CD4-positive, alpha-beta memory T cell (primary cell): ENCODE measurements at regions of chr5 and their contacts with region 1.

Region 1: DNA sequence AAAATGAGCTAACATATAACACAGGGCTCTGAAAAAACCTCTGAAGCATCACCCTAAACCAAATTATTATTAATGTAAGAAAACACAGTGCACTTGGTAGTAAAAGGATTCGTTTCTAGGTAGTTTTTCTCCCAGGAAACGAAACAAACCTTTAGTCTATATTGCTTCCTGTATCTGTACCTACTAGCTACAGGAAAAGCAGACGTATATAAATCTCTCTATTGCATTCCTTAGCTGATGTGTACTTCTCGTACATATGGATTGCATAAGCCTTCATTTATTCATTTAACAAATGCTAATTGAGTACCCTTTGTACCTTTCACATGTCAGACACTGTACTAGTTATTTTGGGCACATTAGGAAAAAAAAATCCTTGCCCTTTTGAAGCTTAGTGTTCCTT is 85.0 kb upstream of the RASA1 start:
- DNase-seq: peak in 4 of 5 donors; percentile 2 to 25 (median 8)
- H3K4me3 ChIP-seq: peak overlapping the region in 1 of 2 donors; percentile 10
- H3K4me3 Mint-ChIP-seq: peak overlapping the region; percentile 22 to 91 (median 75)
- H3K27ac ChIP-seq: no peak overlapping the region
- H3K27ac Mint-ChIP-seq: peak overlapping the region in 4 of 7 donors; percentile 42 to 78 (median 70)
- H3K4me1 ChIP-seq: peaks cover 15% of the 10 kb centered on the region
- H3K4me1 Mint-ChIP-seq: peaks cover 12 to 22% (median 17%) of the 10 kb centered on the region in 4 donors
- H3K27me3 ChIP-seq: no peaks in the 10 kb centered on the region
- H3K27me3 Mint-ChIP-seq: no peaks in the 10 kb centered on the region

Region 2: DNA sequence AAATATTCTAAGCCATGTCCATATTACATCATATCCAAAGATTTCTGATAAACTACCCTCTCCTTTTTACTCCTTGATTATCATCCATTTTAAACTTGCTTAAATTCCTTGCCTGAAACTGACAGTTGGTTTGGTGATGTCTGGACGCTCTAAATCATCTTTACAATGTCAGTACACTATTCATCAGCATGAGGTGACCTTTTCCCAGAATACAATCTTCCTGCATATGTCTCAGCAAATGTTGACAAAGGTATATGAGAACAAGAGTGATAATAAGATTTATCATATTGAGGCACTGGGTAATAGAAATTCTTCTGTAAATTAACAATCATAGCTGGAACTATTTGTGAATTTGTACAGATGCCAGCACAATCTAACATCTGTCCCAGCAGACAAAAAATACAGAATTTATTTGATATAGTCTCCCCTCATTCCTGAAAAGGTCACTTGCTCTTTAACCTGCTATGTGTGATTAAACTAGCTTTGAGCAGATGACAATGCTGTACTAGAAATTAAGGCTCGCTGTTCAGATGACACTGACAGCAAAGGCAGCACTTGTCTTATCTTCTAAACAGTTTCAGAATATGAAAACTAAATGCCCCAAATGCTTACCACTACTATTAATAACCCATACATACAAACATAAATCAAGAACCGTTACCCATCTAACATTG is 532.7 kb before region 1 on chr5:
- CTCF ChIA-PET with region 1: no interaction called
- POLR2A ChIA-PET with region 1: no interaction called
- intact Hi-C with region 1: no loop called
- DNase-seq: no peak
- H3K4me3 ChIP-seq: no peak overlapping the region
- H3K4me3 Mint-ChIP-seq: no peak overlapping the region
- H3K27ac ChIP-seq: no peak overlapping the region
- H3K27ac Mint-ChIP-seq: no peak overlapping the region
- H3K4me1 ChIP-seq: no peaks in the 10 kb centered on the region
- H3K4me1 Mint-ChIP-seq: no peaks in the 10 kb centered on the region
- H3K27me3 ChIP-seq: no peaks in the 10 kb centered on the region
- H3K27me3 Mint-ChIP-seq: peaks cover 5 to 8% of the 10 kb centered on the region in 2 donors

Region 3: GRCh38 chr5:87137283-87137682 is 45.4 kb before region 1 on chr5:
- CTCF ChIA-PET with region 1: interaction called, 3 read pairs
- POLR2A ChIA-PET with region 1: interaction called, 3 read pairs
- intact Hi-C with region 1: loop called (anchors 5 kb)
- DNase-seq: no peak
- H3K4me3 ChIP-seq: no peak overlapping the region
- H3K4me3 Mint-ChIP-seq: no peak overlapping the region
- H3K27ac ChIP-seq: no peak overlapping the region
- H3K27ac Mint-ChIP-seq: no peak overlapping the region
- H3K4me1 ChIP-seq: no peaks in the 10 kb centered on the region
- H3K4me1 Mint-ChIP-seq: peaks cover 0 to 4% (median 0%) of the 10 kb centered on the region in 4 donors
- H3K27me3 ChIP-seq: no peaks in the 10 kb centered on the region
- H3K27me3 Mint-ChIP-seq: no peaks in the 10 kb centered on the region